ENCODE measurements at regions of chr14 and their contacts with region 1.

Region 1: GRCh38 chr14:105439691-105440553 is 20.3 kb downstream of the MTA1 start:
- DNase-seq: peak in 1 of 2 donors; percentile 21
- ATAC-seq: peak in 4 of 8 donors; percentile 22 to 39 (median 26)
- H3K4me3 ChIP-seq: no peak overlapping the region
- H3K27ac ChIP-seq: no peak overlapping the region
- H3K4me1 ChIP-seq: peaks cover 0 to 5% (median 0%) of the 10 kb centered on the region in 9 donors
- H3K27me3 ChIP-seq: no peaks in the 10 kb centered on the region
- CTCF ChIP-seq: peak in 1 of 9 donors; percentile 5

Region 2: GRCh38 chr14:105126981-105127329 is 313.0 kb before region 1 on chr14:
- intact Hi-C with region 1: loop called in 1 of 10 experiments (anchors 5 kb)
- DNase-seq: no peak
- ATAC-seq: no peak
- H3K4me3 ChIP-seq: no peak overlapping the region
- H3K27ac ChIP-seq: no peak overlapping the region
- H3K4me1 ChIP-seq: no peaks in the 10 kb centered on the region
- H3K27me3 ChIP-seq: peaks cover 0 to 14% (median 3%) of the 10 kb centered on the region in 7 donors
- CTCF ChIP-seq: no peak

Region 3: DNA sequence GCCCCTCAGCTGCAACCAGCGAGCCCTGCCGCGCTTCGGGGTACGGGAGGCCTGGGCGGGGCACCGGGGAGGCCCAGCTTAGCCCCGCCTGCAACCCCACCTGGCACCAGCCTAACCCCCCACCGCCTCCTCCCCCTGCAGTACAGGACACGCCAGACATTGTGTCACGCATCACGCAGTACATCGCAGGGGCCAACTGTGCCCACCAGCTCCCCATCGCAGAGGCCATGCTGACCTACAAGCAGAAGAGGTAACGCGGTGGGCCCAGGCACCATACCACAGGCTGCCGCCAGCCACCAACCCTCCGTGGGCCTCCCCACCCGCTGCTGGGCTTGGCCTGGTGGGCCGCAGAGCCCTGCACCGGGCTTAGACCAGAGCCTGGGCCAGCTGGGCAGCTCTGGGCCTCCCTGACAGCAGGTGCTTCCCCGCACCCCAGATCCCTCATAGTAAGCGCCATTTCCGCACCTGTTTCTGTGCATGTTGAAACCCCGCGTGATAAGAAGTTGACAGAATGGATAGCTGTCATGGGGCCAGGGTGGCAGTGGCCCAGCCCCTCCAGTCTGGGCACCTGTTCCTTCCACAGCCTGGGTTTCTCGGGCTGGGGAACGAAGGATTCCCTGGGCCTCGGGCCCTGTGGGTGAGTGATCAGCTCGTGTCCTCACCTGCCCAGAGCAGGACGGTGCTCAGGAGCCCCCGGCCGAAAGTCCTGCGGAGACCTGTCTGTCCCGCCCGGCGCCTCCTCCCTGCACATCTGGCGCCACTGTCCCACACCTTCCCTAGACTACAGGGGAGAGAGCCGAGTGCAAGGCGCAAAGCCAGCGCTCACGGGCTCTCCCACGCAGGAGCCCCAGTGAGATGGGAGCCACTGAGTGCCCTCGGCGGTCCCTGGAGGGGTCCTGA is 54.9 kb before region 1 on chr14:
- intact Hi-C with region 1: loop called in 1 of 10 experiments (anchors 5 kb)
- DNase-seq: no peak
- ATAC-seq: no peak
- H3K4me3 ChIP-seq: no peak overlapping the region
- H3K27ac ChIP-seq: peak overlapping the region in 1 of 10 donors; percentile 56
- H3K4me1 ChIP-seq: peaks cover 0 to 29% (median 0%) of the 10 kb centered on the region in 9 donors
- H3K27me3 ChIP-seq: no peaks in the 10 kb centered on the region
- CTCF ChIP-seq: no peak